ENCODE measurements at regions of chr5 and their contacts with region 1.

Region 1: DNA sequence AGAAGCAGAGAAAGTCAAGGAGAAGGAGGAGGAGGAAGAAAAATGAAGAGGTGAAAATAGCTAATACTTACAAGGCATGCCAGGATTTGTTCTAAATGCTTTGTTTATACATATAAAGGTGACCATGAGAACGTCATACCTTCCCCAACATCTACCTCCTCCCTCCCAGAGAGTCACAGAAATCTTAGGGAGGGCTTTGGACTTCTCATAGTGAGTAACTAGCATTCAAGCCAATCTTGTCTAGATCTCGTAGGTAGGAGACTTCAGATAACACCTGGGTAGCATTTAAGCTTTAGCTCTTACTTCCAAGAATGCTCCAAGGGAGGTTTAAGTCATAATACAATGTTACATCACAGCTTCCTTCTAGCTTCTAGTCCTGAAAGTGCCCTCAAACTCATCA is 36.5 kb upstream of the GPBP1 start:
- DNase-seq: no peak
- ATAC-seq: no peak
- H3K4me3 ChIP-seq: no peak overlapping the region
- H3K27ac ChIP-seq: no peak overlapping the region
- H3K4me1 ChIP-seq: no peaks in the 10 kb centered on the region
- H3K27me3 ChIP-seq: peaks cover 0 to 8% (median 0%) of the 10 kb centered on the region in 7 donors
- CTCF ChIP-seq: no peak

Region 2: GRCh38 chr5:56264417-56265025 is 872.9 kb before region 1 on chr5:
- intact Hi-C with region 1: loop called in 2 of 10 experiments (anchors 2 to 5 kb)
- DNase-seq: no peak
- ATAC-seq: peak in 5 of 8 donors; percentile 43 to 73 (median 68)
- H3K4me3 ChIP-seq: no peak overlapping the region
- H3K27ac ChIP-seq: no peak overlapping the region
- H3K4me1 ChIP-seq: peaks cover 0 to 6% (median 0%) of the 10 kb centered on the region in 9 donors
- H3K27me3 ChIP-seq: peaks cover 0 to 3% (median 0%) of the 10 kb centered on the region in 7 donors
- CTCF ChIP-seq: peak; percentile 29 to 70 (median 58)

Region 3: DNA sequence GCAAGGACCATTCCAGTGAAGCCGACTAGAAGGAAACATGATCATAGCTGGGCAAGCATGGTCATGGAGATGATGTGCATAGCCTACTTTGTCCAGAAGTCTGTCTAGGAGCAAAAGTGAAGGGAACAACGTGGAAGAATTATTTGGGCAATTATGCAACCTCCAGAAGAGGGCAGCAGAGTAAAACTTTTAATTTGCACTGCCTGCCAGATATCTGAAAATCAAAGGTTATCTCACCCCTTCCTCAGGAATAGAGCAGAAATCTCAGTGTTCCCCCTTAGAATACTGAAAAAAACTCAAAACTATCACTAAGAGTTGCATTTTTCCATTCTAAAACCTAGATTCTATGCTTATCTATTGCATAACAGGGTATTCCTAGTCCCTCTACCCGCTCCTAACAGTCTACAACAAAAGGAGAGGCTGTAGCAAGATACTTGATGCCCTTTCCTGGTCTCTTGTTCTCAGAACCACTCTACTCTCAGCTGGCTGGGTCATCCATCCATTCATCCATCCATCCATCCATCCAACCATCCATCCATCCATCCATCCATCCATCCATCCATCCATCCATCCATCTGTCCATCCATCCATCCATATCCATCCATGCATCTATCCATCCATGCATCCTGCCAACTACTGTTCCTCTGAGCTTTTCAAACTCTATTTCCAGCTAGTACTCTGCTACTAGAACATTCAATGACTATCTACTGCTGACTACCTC is 236.4 kb before region 1 on chr5:
- intact Hi-C with region 1: loop called in 7 of 10 experiments (anchors 5 to 10 kb)
- DNase-seq: peak in 1 of 2 donors; percentile 23
- ATAC-seq: peak in 7 of 8 donors; percentile 35 to 78 (median 58)
- H3K4me3 ChIP-seq: no peak overlapping the region
- H3K27ac ChIP-seq: no peak overlapping the region
- H3K4me1 ChIP-seq: peaks cover 0 to 6% (median 0%) of the 10 kb centered on the region in 9 donors
- H3K27me3 ChIP-seq: no peaks in the 10 kb centered on the region
- CTCF ChIP-seq: peak; percentile 56 to 85 (median 75)

Region 4: GRCh38 chr5:57259704-57260103 is 122.3 kb after region 1 on chr5:
- intact Hi-C with region 1: no loop called
- DNase-seq: no peak
- ATAC-seq: no peak
- H3K4me3 ChIP-seq: no peak overlapping the region
- H3K27ac ChIP-seq: no peak overlapping the region
- H3K4me1 ChIP-seq: peaks cover 0 to 18% (median 3%) of the 10 kb centered on the region in 9 donors
- H3K27me3 ChIP-seq: no peaks in the 10 kb centered on the region
- CTCF ChIP-seq: no peak

Region 5: DNA sequence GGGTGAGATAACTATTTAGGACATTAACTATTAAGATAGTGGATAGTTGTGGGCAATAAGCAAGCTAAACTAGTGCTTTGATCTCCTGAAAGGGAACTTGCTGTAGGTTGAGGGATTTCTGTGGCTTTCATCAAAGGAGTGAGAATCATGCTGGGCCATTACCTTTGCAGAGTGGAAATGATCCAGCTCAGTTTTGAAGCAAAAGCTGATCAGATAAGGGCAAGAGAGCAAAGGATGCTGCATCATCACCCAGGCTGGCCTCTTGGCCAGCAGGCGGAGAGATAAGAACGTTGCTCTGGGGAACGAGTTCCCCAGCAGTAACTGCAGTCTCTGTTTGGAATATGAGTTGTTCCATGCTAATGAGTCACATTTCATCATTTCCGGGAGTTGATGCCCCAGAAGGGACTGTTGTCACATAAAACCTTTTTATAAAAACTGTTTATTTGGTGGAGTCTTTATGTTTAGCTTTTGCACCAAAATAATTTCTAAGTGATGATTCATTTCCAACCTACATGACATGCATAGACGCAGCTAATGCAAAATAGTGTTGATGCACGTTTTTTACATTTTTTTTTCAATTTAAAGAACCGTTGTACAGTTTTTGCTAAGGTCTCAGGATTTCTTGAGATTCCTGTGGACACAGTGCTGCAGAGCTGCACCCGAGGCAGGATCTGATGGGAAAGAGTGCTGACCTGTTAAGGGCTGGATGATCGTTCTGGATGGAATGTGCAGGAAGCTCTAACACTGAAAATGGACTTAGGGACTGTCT is 245.9 kb after region 1 on chr5:
- intact Hi-C with region 1: no loop called
- DNase-seq: peak; percentile 5 to 14
- ATAC-seq: peak in 4 of 8 donors; percentile 42 to 94 (median 49)
- H3K4me3 ChIP-seq: no peak overlapping the region
- H3K27ac ChIP-seq: no peak overlapping the region
- H3K4me1 ChIP-seq: peaks cover 0 to 11% (median 8%) of the 10 kb centered on the region in 9 donors
- H3K27me3 ChIP-seq: no peaks in the 10 kb centered on the region
- CTCF ChIP-seq: peak in 2 of 9 donors; percentile 17 to 38

Measured in heart right ventricle (tissue), 16 donors.